ENCODE measurements at regions of chr1 and their contacts with region 1.

Region 1: DNA sequence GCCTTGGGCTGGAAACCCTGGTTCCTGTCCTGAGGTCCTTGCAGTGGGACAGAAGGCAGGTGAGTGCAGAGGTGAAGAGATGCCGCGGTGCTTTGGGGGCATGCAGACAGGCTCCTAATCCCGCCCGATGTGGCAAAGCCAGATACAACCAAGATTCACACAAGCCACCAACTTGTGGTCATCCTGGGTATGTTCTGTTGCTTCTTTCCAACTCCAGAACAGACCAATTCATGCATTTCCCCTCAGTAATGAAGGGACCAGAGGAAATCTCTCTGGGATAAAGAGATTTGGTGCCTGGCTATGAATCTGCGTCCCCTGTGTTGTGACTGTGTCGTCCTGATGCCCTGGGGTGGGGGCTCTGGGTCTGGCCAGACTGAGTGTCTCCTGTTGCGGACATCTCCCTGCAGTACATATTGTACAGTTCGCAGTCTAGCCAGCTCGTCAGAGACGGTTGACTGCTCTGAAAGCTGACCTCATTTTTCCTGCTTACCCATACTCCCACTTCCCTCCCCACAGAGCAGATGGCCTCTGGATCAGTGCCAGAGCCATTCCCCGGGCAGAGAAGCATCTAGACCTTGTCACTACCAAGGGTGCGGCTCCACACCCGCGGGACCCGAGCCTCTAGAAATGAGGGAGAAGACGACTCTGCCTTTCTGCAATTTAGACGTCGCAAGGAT is 216.3 kb downstream of the KIF26B start:
- DNase-seq: no peak
- ATAC-seq: no peak
- H3K4me3 ChIP-seq: no peak overlapping the region
- H3K27ac ChIP-seq: no peak overlapping the region
- H3K4me1 ChIP-seq: no peaks in the 10 kb centered on the region
- H3K27me3 ChIP-seq: peaks cover 0 to 2% of the 10 kb centered on the region in 2 experiments; a peak in 1 of 4 replicates
- CTCF ChIP-seq: no peak
- EP300 ChIP-seq: no peak
- POLR2A ChIP-seq: no peak
- RAD21 ChIP-seq: no peak

Region 2: DNA sequence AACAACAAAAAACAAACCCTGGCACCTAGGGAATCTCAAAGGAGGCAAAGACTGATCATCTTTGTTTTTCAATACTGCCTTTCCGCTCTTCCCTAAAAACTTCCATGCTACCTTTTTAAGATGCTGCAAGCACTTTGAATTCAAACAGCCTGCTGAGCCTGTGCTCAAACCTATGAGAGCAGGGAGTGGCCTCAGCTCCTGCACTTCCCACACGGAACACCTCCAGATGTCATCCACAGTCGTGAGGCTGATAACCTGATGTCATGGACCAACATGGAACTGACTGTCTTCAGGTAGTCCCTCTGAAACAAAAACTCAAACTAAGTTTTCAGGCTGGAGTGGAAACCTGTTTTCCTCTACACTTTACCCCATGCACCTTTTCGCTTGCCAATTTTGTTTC is 671.3 kb before region 1 on chr1:
- CTCF ChIA-PET with region 1: no interaction called
- POLR2A ChIA-PET with region 1: interaction called, 11 read pairs
- RAD21 ChIA-PET with region 1: no interaction called
- SMC1A ChIA-PET with region 1: no interaction called
- in situ Hi-C with region 1: no loop called
- intact Hi-C with region 1: no loop called
- DNase-seq: no peak
- ATAC-seq: no peak
- H3K4me3 ChIP-seq: no peak overlapping the region
- H3K27ac ChIP-seq: no peak overlapping the region
- H3K4me1 ChIP-seq: no peaks in the 10 kb centered on the region
- H3K27me3 ChIP-seq: no peaks in the 10 kb centered on the region
- CTCF ChIP-seq: no peak
- EP300 ChIP-seq: no peak
- POLR2A ChIP-seq: no peak
- RAD21 ChIP-seq: no peak

Region 3: DNA sequence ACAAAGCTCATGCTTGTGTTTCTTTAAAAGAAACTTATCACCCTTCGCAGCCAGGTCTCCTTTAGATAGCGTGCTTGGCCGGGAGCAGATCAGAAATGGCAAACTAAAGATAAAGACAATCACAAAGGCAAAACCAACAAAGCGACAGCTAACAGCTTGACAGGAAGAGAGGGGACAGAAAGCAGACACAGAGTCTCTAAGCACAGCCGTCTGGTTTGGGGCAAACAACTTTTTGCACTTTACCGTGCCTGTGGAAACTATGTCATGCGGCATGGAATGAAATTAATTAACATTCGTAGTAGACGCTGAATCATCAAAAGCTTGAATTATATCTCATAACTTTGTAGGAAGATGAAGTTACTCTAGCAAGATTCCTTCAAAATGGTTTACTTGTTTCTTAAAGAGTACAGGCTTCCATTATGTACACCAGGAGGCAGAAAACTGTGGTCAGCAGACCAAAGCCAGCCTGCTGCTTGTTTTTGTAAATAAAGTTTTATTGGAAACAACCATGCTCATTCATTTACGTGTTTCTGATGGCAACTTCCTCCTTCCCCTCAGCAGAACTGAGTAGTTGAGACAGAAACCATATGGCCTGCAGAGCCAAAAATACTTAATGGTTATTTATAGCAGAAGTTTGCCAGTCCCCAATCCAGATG is 33.1 kb before region 1 on chr1:
- CTCF ChIA-PET with region 1: no interaction called
- POLR2A ChIA-PET with region 1: no interaction called
- RAD21 ChIA-PET with region 1: no interaction called
- SMC1A ChIA-PET with region 1: no interaction called
- in situ Hi-C with region 1: no loop called
- intact Hi-C with region 1: no loop called
- DNase-seq: no peak
- ATAC-seq: no peak
- H3K4me3 ChIP-seq: no peak overlapping the region
- H3K27ac ChIP-seq: no peak overlapping the region
- H3K4me1 ChIP-seq: no peaks in the 10 kb centered on the region
- H3K27me3 ChIP-seq: no peaks in the 10 kb centered on the region
- CTCF ChIP-seq: no peak
- EP300 ChIP-seq: no peak
- POLR2A ChIP-seq: no peak
- RAD21 ChIP-seq: no peak

Measured in GM12878 (cell line).